Activated CD4-positive, alpha-beta memory T cell treated with anti-CD3 and anti-CD28 coated beads for 36 hours (primary cell): ENCODE measurements at regions of chr6 and their contacts with region 1.

Region 1: GRCh38 chr6:168370310-168370991 is 50.9 kb upstream of the DACT2 start:
- DNase-seq: peak; percentile 72
- H3K4me3 Mint-ChIP-seq: no peak overlapping the region
- H3K27ac Mint-ChIP-seq: no peak overlapping the region
- H3K4me1 Mint-ChIP-seq: peaks cover 5% of the 10 kb centered on the region
- H3K27me3 Mint-ChIP-seq: peaks cover 3% of the 10 kb centered on the region

Region 2: DNA sequence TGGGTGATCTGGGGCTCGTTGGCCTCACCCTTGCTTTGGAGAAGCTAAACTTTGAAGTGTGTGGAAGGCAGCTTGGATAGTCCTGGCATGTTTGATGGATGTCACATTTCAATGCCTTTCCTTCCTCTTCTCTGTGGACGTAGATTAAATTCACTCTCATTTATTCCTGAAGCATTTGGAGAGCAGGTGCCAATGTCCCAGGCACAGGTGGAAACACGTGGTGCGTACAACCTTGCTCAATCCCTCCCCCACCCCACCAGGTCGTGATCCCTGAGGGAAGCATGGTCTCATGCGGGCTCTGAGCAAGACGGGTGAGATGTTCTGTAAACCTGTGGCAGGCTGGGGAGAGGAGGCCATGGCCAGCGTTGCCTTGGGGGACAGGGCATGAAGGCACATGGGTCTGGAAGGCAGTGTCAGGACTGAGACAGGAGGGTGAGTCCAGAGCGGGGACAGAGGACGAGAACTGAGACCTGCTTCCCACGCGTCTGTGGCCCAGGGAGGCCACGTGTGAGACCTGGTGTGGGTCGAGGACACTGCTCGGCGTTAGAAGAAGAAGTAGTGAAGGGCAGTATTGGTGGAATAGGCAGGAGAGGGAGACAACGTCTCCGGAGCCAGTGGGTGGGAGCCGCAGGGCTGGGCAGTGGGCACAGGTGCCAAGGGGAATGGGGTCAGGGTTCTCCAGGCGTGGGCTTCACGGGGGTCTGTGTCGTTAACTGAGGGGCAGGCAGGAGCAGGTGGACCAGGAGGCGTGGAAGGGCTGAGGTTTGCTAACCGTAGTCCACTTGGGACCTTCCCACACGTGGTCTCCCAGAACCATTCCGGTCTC is 105.0 kb after region 1 on chr6:
- CTCF ChIA-PET with region 1: no interaction called
- POLR2A ChIA-PET with region 1: no interaction called
- intact Hi-C with region 1: no loop called
- DNase-seq: no peak
- H3K4me3 Mint-ChIP-seq: no peak overlapping the region
- H3K27ac Mint-ChIP-seq: no peak overlapping the region
- H3K4me1 Mint-ChIP-seq: no peaks in the 10 kb centered on the region
- H3K27me3 Mint-ChIP-seq: peaks cover 18% of the 10 kb centered on the region

Region 3: DNA sequence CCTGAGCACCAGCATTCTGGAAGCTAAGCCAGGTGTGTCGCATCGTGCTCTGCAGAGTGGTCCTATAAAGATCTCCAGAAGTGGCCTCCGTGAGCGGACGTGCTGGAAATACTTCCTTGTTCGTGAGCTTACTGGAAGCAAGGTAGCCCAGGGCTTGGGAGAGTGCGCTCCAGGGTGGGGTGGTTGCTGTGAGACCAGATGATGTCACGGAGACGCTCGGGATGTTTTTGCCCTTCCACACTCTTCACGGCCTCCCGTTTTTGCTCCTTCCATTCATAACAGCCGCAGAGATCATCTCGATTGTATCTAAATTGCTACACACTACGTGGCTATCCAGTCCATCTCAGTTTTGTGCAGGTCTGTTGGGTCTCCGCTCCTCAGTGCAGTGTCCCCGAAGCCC is 509.8 kb after region 1 on chr6:
- CTCF ChIA-PET with region 1: interaction called, 16 read pairs
- POLR2A ChIA-PET with region 1: no interaction called
- intact Hi-C with region 1: no loop called
- DNase-seq: no peak
- H3K4me3 Mint-ChIP-seq: no peak overlapping the region
- H3K27ac Mint-ChIP-seq: no peak overlapping the region
- H3K4me1 Mint-ChIP-seq: peaks cover 12% of the 10 kb centered on the region
- H3K27me3 Mint-ChIP-seq: peaks cover 7% of the 10 kb centered on the region